Gastrocnemius medialis (tissue), 4 donors: ENCODE measurements at regions of chr6 and their contacts with region 1.

Region 1: GRCh38 chr6:157597446-157598312 is 216.7 kb downstream of the ZDHHC14 start:
- DNase-seq: peak in 1 of 2 donors; percentile 40
- ATAC-seq: peak; percentile 53 to 72
- H3K4me3 ChIP-seq: no peak overlapping the region
- H3K27ac ChIP-seq: no peak overlapping the region
- H3K4me1 ChIP-seq: no peaks in the 10 kb centered on the region
- H3K27me3 ChIP-seq: no peaks in the 10 kb centered on the region
- CTCF ChIP-seq: peak in 4 of 5 experiments; percentile 5 to 53 (median 33)
- POLR2A ChIP-seq: no peak

Region 2: GRCh38 chr6:157323255-157323965 is 274.3 kb before region 1 on chr6 and contains the start of gene TMEM242:
- in situ Hi-C with region 1: loop called in 1 of 4 experiments (anchors 10 kb)
- intact Hi-C with region 1: no loop called
- DNase-seq: peak; percentile 85 to 90
- ATAC-seq: peak; percentile 95
- H3K4me3 ChIP-seq: peak within 1 kb of the TSS; percentile 73 to 91 (median 80)
- H3K27ac ChIP-seq: peak within 1 kb of the TSS; percentile 89 to 94 (median 92)
- H3K4me1 ChIP-seq: peaks cover 16 to 31% of the 10 kb centered on the region in 2 donors
- H3K27me3 ChIP-seq: no peaks in the 10 kb centered on the region
- CTCF ChIP-seq: peak in 4 of 5 experiments; percentile 41 to 48 (median 42)
- POLR2A ChIP-seq: peak; percentile 78
- total RNA-seq, gene TMEM242: 3.9 to 7.7 (median 6.3) TPM

Region 3: GRCh38 chr6:158506577-158506976 is 908.9 kb after region 1 on chr6:
- in situ Hi-C with region 1: no loop called
- intact Hi-C with region 1: no loop called
- DNase-seq: no peak
- ATAC-seq: no peak
- H3K4me3 ChIP-seq: no peak overlapping the region
- H3K27ac ChIP-seq: no peak overlapping the region
- H3K4me1 ChIP-seq: no peaks in the 10 kb centered on the region
- H3K27me3 ChIP-seq: no peaks in the 10 kb centered on the region
- CTCF ChIP-seq: no peak
- POLR2A ChIP-seq: no peak